ENCODE measurements at regions of chr14 and their contacts with region 1.

Region 1: DNA sequence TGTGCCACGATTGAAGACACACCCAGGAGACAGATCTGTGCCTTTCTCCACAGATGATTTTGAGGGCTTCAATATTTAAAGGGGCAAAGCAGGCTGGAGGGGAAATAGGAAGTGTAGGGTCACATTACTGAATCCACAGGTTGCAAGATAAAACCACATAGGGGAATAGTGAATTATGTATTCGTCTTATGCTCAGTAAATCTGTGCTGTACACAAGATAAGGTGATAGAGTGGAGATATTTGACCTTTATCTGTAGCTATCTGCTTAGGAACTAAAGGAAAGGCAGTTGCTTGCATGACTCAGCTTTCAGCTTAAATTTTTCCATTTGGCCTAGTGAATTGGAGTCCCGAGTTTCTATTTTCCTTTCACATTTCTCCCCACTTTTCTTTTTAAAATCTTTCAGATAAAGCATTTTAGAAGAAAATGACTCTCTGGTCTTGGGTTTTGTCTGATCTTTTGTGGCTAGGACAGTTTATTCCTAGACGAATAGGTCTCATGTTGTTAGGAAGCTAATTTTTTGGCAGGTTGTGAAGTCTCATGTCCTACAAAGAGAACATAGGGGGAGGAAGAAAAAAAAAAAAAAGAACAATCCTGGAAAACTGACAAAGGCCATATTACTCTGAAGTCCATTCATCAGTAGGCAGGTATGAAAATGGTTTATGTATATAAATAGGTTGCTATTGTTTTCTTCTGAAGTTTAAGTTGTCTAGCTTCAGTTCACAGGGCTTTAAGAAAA is 55.4 kb downstream of the FBXO33 start:
- DNase-seq: peak; percentile 10 to 61
- H3K4me3 ChIP-seq: no peak overlapping the region
- H3K27ac ChIP-seq: peak overlapping the region; percentile 82
- H3K4me1 ChIP-seq: peaks cover 18% of the 10 kb centered on the region
- H3K27me3 ChIP-seq: no peaks in the 10 kb centered on the region
- CTCF ChIP-seq: no peak

Region 2: GRCh38 chr14:38775986-38776385 is 600.8 kb before region 1 on chr14:
- CTCF ChIA-PET with region 1: no interaction called
- POLR2A ChIA-PET with region 1: no interaction called
- intact Hi-C with region 1: no loop called
- DNase-seq: no peak
- H3K4me3 ChIP-seq: no peak overlapping the region
- H3K27ac ChIP-seq: no peak overlapping the region
- H3K4me1 ChIP-seq: no peaks in the 10 kb centered on the region
- H3K27me3 ChIP-seq: no peaks in the 10 kb centered on the region
- CTCF ChIP-seq: no peak

Region 3: GRCh38 chr14:39169541-39169900 is 207.3 kb before region 1 on chr14:
- CTCF ChIA-PET with region 1: no interaction called
- POLR2A ChIA-PET with region 1: interaction called, 18 read pairs
- intact Hi-C with region 1: no loop called
- DNase-seq: no peak
- H3K4me3 ChIP-seq: peak overlapping the region; percentile 96
- H3K27ac ChIP-seq: peak overlapping the region; percentile 92
- H3K4me1 ChIP-seq: peaks cover 12% of the 10 kb centered on the region
- H3K27me3 ChIP-seq: no peaks in the 10 kb centered on the region
- CTCF ChIP-seq: no peak

Region 4: GRCh38 chr14:39339003-39339402 is 37.8 kb before region 1 on chr14:
- CTCF ChIA-PET with region 1: no interaction called
- POLR2A ChIA-PET with region 1: no interaction called
- intact Hi-C with region 1: no loop called
- DNase-seq: no peak
- H3K4me3 ChIP-seq: no peak overlapping the region
- H3K27ac ChIP-seq: no peak overlapping the region
- H3K4me1 ChIP-seq: no peaks in the 10 kb centered on the region
- H3K27me3 ChIP-seq: no peaks in the 10 kb centered on the region
- CTCF ChIP-seq: no peak